A549 (cell line): ENCODE measurements at regions of chr4 and their contacts with region 1.

Region 1: GRCh38 chr4:168480931-168481611 is 779 bp upstream of the DDX60L start:
- DNase-seq: peak; percentile 54 to 72
- ATAC-seq: peak; percentile 75
- H3K4me3 ChIP-seq: peak overlapping the region; percentile 45
- H3K27ac ChIP-seq: peak overlapping the region; percentile 92 to 97
- H3K4me1 ChIP-seq: peaks cover 42% of the 10 kb centered on the region
- CTCF ChIP-seq: no peak
- EP300 ChIP-seq: no peak
- POLR2A ChIP-seq: no peak
- RAD21 ChIP-seq: no peak

Region 2: DNA sequence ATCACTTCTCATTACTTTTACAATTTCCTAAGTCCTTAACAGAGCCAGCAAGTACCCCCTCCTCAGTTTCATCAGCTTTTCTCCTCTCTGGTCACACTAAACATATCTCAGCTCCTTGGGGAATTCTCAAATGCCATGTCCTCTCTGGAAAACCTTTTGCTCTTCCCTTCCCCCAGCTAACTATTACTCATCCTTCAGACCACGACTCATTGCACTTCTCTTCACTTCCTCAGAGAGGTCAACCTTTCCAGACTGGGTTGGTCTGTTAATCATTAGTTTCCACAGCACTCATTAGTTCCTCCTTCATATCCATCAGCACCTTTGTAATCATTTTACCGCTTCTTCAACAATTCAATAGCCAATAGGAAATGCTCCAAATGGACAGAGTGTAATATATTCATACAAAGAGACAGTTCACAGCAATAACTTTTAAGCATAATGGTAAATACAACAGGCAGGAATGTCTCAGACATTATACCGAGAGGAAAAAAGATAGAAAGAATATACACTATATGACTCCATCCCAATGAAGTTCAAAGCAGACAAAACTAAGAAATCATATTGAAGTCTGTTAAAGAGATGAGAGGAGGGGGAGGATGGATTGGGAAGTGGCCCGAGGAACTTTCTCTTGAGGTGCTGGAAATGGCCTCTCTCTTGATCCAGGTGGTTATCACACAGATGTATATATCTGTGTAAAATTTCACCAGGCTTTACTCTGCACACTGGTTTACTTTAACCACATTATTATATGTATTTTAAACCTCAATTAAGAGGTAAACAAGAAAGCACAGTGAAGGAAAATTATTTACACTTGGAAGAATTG is 40.4 kb before region 1 on chr4:
- CTCF ChIA-PET with region 1: no interaction called
- POLR2A ChIA-PET with region 1: interaction called, 14 read pairs
- DNase-seq: peak; percentile 77 to 87
- ATAC-seq: peak; percentile 98 to 99
- H3K4me3 ChIP-seq: no peak overlapping the region
- H3K27ac ChIP-seq: peak overlapping the region; percentile 81 to 90
- H3K4me1 ChIP-seq: peaks cover 28% of the 10 kb centered on the region
- CTCF ChIP-seq: no peak
- EP300 ChIP-seq: no peak; a peak in 1 of 5 replicates
- POLR2A ChIP-seq: no peak
- RAD21 ChIP-seq: peak; percentile 19 to 23; a peak in 2 of 5 replicates

Region 3: GRCh38 chr4:168451744-168452390 is 29.2 kb before region 1 on chr4:
- CTCF ChIA-PET with region 1: no interaction called
- POLR2A ChIA-PET with region 1: interaction called, 11 read pairs
- DNase-seq: peak in 1 of 2 experiments; percentile 81
- ATAC-seq: peak; percentile 92 to 97
- H3K4me3 ChIP-seq: no peak overlapping the region
- H3K27ac ChIP-seq: peak overlapping the region; percentile 60 to 84
- H3K4me1 ChIP-seq: peaks cover 43% of the 10 kb centered on the region
- CTCF ChIP-seq: no peak
- EP300 ChIP-seq: no peak
- POLR2A ChIP-seq: no peak
- RAD21 ChIP-seq: peak in 1 of 2 experiments; percentile 7; a peak in 1 of 5 replicates

Region 4: DNA sequence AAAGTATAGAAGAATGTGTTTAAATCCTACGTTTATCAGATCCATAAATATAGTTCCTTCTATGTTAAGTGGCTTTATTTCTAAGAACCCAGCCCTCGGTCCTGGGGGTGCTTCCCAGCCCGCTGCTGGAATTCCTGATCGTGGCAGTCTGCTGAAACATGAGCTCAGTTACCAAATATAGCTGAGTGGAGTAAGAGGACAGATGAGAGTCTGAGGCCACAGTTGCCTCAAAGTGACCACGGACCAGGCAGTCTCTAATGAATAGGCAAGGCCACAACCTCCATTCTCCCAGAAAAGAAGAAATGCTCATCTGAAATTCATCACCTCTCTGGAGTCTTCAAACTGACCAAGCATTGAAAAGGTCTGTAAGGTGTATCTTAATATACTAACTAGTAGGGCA is 15.8 kb after region 1 on chr4 and contains the start of gene PALLD:
- CTCF ChIA-PET with region 1: no interaction called
- POLR2A ChIA-PET with region 1: no interaction called
- DNase-seq: no peak
- ATAC-seq: peak in 1 of 2 experiments; percentile 40; a peak in 1 of 6 replicates
- H3K4me3 ChIP-seq: no peak within 1 kb of the TSS
- H3K27ac ChIP-seq: peak within 1 kb of the TSS in 1 of 2 experiments; percentile 8; a peak in 2 of 6 replicates
- H3K4me1 ChIP-seq: peaks cover 58% of the 10 kb centered on the region
- CTCF ChIP-seq: no peak
- EP300 ChIP-seq: no peak
- POLR2A ChIP-seq: no peak
- RAD21 ChIP-seq: no peak
- polyA plus RNA-seq, gene PALLD: 88.8 and 99.3 TPM in 2 replicates